GM12878 (cell line): ENCODE measurements at regions of chr12 and their contacts with region 1.

Region 1: GRCh38 chr12:76621582-76622024 is 62.0 kb upstream of the OSBPL8 start:
- DNase-seq: peak; percentile 21
- ATAC-seq: peak; percentile 88
- H3K4me3 ChIP-seq: no peak overlapping the region
- H3K27ac ChIP-seq: no peak overlapping the region
- H3K4me1 ChIP-seq: no peaks in the 10 kb centered on the region
- H3K27me3 ChIP-seq: no peaks in the 10 kb centered on the region
- CTCF ChIP-seq: peak; percentile 84 to 93 (median 86)
- EP300 ChIP-seq: no peak
- POLR2A ChIP-seq: no peak
- RAD21 ChIP-seq: peak; percentile 99

Region 2: GRCh38 chr12:76633415-76633814 is 11.8 kb after region 1 on chr12:
- CTCF ChIA-PET with region 1: interaction called, 12 read pairs
- POLR2A ChIA-PET with region 1: no interaction called
- RAD21 ChIA-PET with region 1: interaction called, 5 read pairs
- SMC1A ChIA-PET with region 1: interaction called, 11 read pairs
- in situ Hi-C with region 1: no loop called
- intact Hi-C with region 1: no loop called
- DNase-seq: no peak
- ATAC-seq: no peak
- H3K4me3 ChIP-seq: no peak overlapping the region
- H3K27ac ChIP-seq: no peak overlapping the region
- H3K4me1 ChIP-seq: no peaks in the 10 kb centered on the region
- H3K27me3 ChIP-seq: no peaks in the 10 kb centered on the region
- CTCF ChIP-seq: no peak
- EP300 ChIP-seq: no peak
- POLR2A ChIP-seq: no peak
- RAD21 ChIP-seq: no peak

Region 3: DNA sequence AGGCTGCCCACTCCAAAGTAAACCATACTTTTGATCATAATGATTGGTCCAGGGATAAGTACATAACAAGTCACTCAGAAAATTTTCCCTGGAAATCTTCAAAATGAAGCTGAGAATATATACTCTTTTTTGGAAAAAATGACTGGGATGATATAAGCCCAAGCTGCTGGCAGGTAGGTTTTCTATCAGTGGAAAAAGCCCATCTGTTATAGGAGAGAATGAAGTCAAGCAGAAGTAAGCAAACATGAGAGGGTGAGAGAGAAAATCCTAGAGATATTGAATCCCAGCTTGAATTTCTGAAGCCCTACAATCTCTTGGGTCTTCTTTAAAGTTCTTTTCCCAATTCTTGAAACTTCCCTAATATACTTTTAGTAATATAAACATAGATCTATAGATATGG is 105.0 kb after region 1 on chr12:
- CTCF ChIA-PET with region 1: no interaction called
- POLR2A ChIA-PET with region 1: no interaction called
- RAD21 ChIA-PET with region 1: no interaction called
- SMC1A ChIA-PET with region 1: no interaction called
- in situ Hi-C with region 1: no loop called
- intact Hi-C with region 1: no loop called
- DNase-seq: no peak
- ATAC-seq: no peak
- H3K4me3 ChIP-seq: no peak overlapping the region
- H3K27ac ChIP-seq: no peak overlapping the region
- H3K4me1 ChIP-seq: no peaks in the 10 kb centered on the region
- H3K27me3 ChIP-seq: no peaks in the 10 kb centered on the region
- CTCF ChIP-seq: no peak
- EP300 ChIP-seq: no peak
- POLR2A ChIP-seq: no peak
- RAD21 ChIP-seq: no peak

Region 4: DNA sequence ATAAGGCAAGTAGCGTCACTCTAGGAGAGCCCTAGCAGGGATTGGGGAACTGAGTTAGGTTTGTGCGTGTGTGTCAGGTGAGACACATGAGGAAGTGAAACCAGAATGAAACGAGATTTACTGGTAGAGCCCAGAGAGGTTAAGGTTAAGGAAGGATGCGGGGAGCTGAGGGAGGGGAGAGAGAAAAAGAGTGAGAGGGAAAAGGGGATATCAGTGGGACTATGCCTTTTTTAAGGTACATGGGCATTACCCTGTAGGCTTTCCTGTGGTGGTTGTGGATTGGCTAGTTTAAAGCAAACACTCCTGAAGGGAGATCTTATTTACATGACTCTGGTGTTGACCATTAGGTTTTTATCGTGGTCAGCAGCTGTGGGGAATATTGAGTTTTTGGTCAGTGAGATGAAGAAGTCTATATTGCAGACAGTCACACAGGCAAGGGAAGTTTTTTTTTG is 156.2 kb after region 1 on chr12:
- CTCF ChIA-PET with region 1: interaction called, 12 read pairs
- POLR2A ChIA-PET with region 1: interaction called, 3 read pairs
- RAD21 ChIA-PET with region 1: no interaction called
- SMC1A ChIA-PET with region 1: interaction called, 3 read pairs
- in situ Hi-C with region 1: no loop called
- intact Hi-C with region 1: no loop called
- DNase-seq: peak; percentile 53
- ATAC-seq: peak; percentile 98
- H3K4me3 ChIP-seq: 0 out of 2 replicates have a peak overlapping the region, but pooled peaks have one; percentile 8
- H3K27ac ChIP-seq: peak overlapping the region; percentile 58
- H3K4me1 ChIP-seq: peaks cover 13% of the 10 kb centered on the region
- H3K27me3 ChIP-seq: no peaks in the 10 kb centered on the region
- CTCF ChIP-seq: no peak
- EP300 ChIP-seq: peak; percentile 29 to 90; a peak in 3 of 4 replicates
- POLR2A ChIP-seq: no peak
- RAD21 ChIP-seq: no peak

Region 5: DNA sequence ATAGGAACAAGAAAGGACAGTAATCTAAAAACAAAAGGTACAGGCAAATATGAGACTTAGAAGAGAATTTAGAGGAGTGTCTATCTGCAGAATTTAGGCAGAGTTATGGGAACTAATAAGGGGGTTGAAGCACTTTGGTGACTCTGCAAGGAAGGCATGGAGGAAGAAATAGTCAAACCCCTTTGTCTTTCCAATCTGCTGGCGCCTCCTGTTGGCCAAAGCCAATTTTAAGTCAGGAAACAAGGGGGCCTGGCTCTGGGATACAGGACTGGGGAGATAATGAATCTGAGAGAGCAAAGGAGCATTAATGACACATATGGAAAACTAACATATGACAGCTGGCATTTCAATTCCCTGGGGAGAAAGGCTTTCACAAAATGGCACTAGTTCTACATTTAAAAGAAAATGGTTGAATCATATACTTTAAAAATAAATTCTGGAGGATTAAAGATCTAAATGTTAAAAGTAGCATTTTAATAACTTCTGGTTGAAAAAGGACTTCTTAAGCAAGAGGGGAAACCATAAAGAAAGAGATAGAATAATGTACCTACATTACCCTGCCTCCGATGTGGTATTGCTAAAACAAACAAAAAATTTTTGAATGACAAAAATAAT is 305.7 kb after region 1 on chr12:
- CTCF ChIA-PET with region 1: interaction called, 13 read pairs
- POLR2A ChIA-PET with region 1: no interaction called
- RAD21 ChIA-PET with region 1: no interaction called
- SMC1A ChIA-PET with region 1: no interaction called
- in situ Hi-C with region 1: no loop called
- intact Hi-C with region 1: loop called (anchors 1 kb)
- DNase-seq: no peak
- ATAC-seq: peak; percentile 69
- H3K4me3 ChIP-seq: no peak overlapping the region
- H3K27ac ChIP-seq: no peak overlapping the region
- H3K4me1 ChIP-seq: no peaks in the 10 kb centered on the region
- H3K27me3 ChIP-seq: no peaks in the 10 kb centered on the region; a peak in 1 of 4 replicates
- CTCF ChIP-seq: peak; percentile 51 to 56 (median 54)
- EP300 ChIP-seq: no peak
- POLR2A ChIP-seq: no peak
- RAD21 ChIP-seq: peak; percentile 74

Region 6: GRCh38 chr12:77010691-77011548 is 389.3 kb after region 1 on chr12:
- CTCF ChIA-PET with region 1: interaction called, 84 read pairs
- POLR2A ChIA-PET with region 1: no interaction called
- RAD21 ChIA-PET with region 1: interaction called, 39 read pairs
- SMC1A ChIA-PET with region 1: interaction called, 28 read pairs
- in situ Hi-C with region 1: loop called (anchors 5 kb)
- intact Hi-C with region 1: loop called (anchors 1 kb)
- DNase-seq: peak; percentile 7
- ATAC-seq: peak; percentile 97
- H3K4me3 ChIP-seq: no peak overlapping the region
- H3K27ac ChIP-seq: no peak overlapping the region
- H3K4me1 ChIP-seq: no peaks in the 10 kb centered on the region
- H3K27me3 ChIP-seq: no peaks in the 10 kb centered on the region
- CTCF ChIP-seq: peak; percentile 85 to 95 (median 94)
- EP300 ChIP-seq: no peak
- POLR2A ChIP-seq: no peak
- RAD21 ChIP-seq: peak; percentile 83